ENCODE measurements at regions of chr3 and their contacts with region 1.

Region 1: DNA sequence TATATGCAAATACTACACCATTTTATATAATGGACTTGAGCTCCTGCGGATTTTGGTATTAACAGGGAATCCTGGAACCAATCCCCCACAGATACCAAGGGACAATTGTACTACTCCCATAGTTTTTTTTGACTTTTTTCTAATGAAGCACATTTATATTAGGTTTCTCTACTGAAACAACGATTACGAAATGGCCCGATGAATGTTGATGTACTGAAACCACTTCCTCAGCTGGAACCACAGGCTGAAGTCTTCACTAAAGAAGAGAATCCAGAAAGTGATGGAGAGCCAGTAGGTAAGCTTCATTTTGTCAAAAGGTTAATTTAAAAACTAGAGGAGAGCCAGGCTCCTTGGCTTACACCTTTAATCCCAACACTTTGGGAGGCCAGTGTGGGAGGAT is 121.5 kb upstream of the LRRFIP2 start:
- DNase-seq: no peak
- ATAC-seq: no peak
- H3K4me3 ChIP-seq: no peak overlapping the region
- H3K27ac ChIP-seq: no peak overlapping the region
- H3K4me1 ChIP-seq: no peaks in the 10 kb centered on the region
- H3K27me3 ChIP-seq: no peaks in the 10 kb centered on the region
- CTCF ChIP-seq: no peak

Region 2: DNA sequence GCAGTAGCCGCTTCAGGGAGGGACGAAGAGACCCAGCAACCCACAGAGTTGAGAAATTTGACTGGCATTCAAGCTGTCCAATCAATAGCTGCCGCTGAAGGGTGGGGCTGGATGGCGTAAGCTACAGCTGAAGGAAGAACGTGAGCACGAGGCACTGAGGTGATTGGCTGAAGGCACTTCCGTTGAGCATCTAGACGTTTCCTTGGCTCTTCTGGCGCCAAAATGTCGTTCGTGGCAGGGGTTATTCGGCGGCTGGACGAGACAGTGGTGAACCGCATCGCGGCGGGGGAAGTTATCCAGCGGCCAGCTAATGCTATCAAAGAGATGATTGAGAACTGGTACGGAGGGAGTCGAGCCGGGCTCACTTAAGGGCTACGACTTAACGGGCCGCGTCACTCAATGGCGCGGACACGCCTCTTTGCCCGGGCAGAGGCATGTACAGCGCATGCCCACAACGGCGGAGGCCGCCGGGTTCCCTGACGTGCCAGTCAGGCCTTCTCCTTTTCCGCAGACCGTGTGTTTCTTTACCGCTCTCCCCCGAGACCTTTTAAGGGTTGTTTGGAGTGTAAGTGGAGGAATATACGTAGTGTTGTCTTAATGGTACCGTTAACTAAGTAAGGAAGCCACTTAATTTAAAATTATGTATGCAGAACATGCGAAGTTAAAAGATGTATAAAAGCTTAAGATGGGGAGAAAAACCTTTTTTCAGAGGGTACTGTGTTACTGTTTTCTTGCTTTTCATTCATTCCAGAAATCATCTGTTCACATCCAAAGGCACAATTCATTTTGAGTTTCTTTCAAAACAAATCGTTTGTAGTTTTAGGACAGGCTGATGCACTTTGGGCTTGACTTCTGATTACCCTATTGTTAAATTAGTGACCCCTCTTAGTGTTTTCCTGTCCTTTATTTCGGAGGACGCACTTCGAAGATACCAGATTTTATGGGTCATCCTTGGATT is 302.3 kb before region 1 on chr3 and contains the start of gene MLH1:
- CTCF ChIA-PET with region 1: interaction called, 12 read pairs
- POLR2A ChIA-PET with region 1: no interaction called
- in situ Hi-C with region 1: no loop called
- intact Hi-C with region 1: no loop called
- DNase-seq: peak; percentile 100
- ATAC-seq: peak; percentile 96
- H3K4me3 ChIP-seq: peak within 1 kb of the TSS; percentile 92 to 99
- H3K27ac ChIP-seq: peak within 1 kb of the TSS; percentile 97
- H3K4me1 ChIP-seq: peaks cover 21% of the 10 kb centered on the region
- H3K27me3 ChIP-seq: no peaks in the 10 kb centered on the region
- CTCF ChIP-seq: no peak
- total RNA-seq, gene MLH1: 28.5 TPM

Region 3: GRCh38 chr3:37367436-37367835 is 71.5 kb after region 1 on chr3:
- CTCF ChIA-PET with region 1: no interaction called
- POLR2A ChIA-PET with region 1: interaction called, 10 read pairs
- in situ Hi-C with region 1: no loop called
- intact Hi-C with region 1: no loop called
- DNase-seq: no peak
- ATAC-seq: no peak
- H3K4me3 ChIP-seq: no peak overlapping the region
- H3K27ac ChIP-seq: no peak overlapping the region
- H3K4me1 ChIP-seq: no peaks in the 10 kb centered on the region
- H3K27me3 ChIP-seq: no peaks in the 10 kb centered on the region
- CTCF ChIP-seq: no peak